Left ventricle myocardium superior (tissue), 1 donor: ENCODE measurements at regions of chr13 and their contacts with region 1.

Region 1: GRCh38 chr13:110433014-110433413 is 125.9 kb downstream of the COL4A2 start:
- DNase-seq: peak; percentile 73
- ATAC-seq: peak; percentile 75

Region 2: GRCh38 chr13:110089815-110090214 is 343.2 kb before region 1 on chr13:
- intact Hi-C with region 1: no loop called
- DNase-seq: no peak
- ATAC-seq: no peak

Region 3: DNA sequence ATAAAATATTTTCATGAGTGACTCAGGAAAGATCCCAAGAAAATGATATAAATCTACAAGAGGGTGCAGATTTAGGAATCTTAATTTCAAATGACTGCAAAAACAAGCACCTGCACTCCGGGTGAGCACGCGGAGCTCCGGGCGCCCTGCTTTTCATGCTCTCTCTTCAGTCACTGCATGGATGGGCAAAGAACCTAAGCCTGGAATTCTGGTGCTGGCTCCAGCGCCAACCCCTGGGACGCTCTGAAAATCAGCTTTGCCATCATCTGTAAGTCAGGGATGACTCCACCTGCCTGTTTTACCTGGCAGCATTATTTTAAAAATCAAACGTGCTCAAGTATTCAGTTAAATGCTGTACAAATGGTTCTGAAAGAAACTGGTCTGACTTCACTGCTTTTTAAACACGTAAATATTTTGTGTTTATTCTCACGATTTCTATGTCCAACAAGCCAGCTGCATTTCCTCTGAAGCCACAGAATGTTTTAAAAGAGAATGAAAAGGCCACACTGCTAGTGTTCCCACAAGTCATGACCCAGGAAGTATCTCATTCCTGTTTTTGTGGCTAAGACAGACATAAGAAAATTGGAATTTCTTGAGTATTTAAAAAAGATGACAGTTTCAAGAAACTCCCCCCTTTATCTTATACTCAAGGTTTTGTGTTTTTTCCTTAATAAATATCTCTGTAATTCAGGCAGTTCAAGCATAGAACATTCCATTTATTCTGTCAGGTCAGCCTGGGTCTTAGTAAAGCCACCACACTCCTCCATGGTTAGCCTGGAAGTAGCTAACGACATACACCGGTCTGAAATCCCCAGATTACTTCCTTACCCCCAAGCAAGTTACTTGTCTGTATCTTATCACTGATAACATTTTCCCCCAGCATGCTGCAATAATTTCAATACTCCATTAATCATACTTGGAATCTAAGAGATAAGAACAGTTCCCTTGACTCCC is 207.1 kb before region 1 on chr13:
- intact Hi-C with region 1: loop called (anchors 10 kb)
- DNase-seq: no peak
- ATAC-seq: no peak